ENCODE measurements at regions of chr14 and their contacts with region 1.

Region 1: GRCh38 chr14:102774391-102775153 is 2.7 kb upstream of the TRAF3 start:
- DNase-seq: peak; percentile 48 to 91 (median 59)
- ATAC-seq: peak; percentile 59
- H3K4me3 ChIP-seq: no peak overlapping the region
- H3K4me3 Mint-ChIP-seq: peak overlapping the region; percentile 83
- H3K27ac ChIP-seq: peak overlapping the region; percentile 64 to 92
- H3K27ac Mint-ChIP-seq: peak overlapping the region; percentile 88
- H3K4me1 ChIP-seq: peaks cover 39% of the 10 kb centered on the region
- H3K4me1 Mint-ChIP-seq: peaks cover 26% of the 10 kb centered on the region
- H3K27me3 ChIP-seq: no peaks in the 10 kb centered on the region
- H3K27me3 Mint-ChIP-seq: no peaks in the 10 kb centered on the region
- CTCF ChIP-seq: peak; percentile 73

Region 2: GRCh38 chr14:102086972-102087761 is 687.4 kb before region 1 on chr14 and contains the start of gene HSP90AA1:
- CTCF ChIA-PET with region 1: no interaction called
- POLR2A ChIA-PET with region 1: no interaction called
- intact Hi-C with region 1: loop called in 1 of 2 experiments (anchors 5 kb)
- DNase-seq: peak; percentile 88 to 98 (median 94)
- ATAC-seq: peak; percentile 77
- H3K4me3 ChIP-seq: peak within 1 kb of the TSS; percentile 74
- H3K4me3 Mint-ChIP-seq: peak within 1 kb of the TSS; percentile 98
- H3K27ac ChIP-seq: peak within 1 kb of the TSS; percentile 95 to 98
- H3K27ac Mint-ChIP-seq: peak within 1 kb of the TSS; percentile 91
- H3K4me1 ChIP-seq: peaks cover 51% of the 10 kb centered on the region
- H3K4me1 Mint-ChIP-seq: peaks cover 64% of the 10 kb centered on the region
- H3K27me3 ChIP-seq: no peaks in the 10 kb centered on the region
- H3K27me3 Mint-ChIP-seq: no peaks in the 10 kb centered on the region
- CTCF ChIP-seq: no peak
- total RNA-seq, gene HSP90AA1: 451 to 462 TPM

Region 3: GRCh38 chr14:102694530-102695166 is 79.9 kb before region 1 on chr14:
- CTCF ChIA-PET with region 1: interaction called, 6 read pairs
- POLR2A ChIA-PET with region 1: no interaction called
- intact Hi-C with region 1: loop called in 1 of 2 experiments (anchors 5 kb)
- DNase-seq: peak; percentile 15 to 81 (median 45)
- ATAC-seq: peak; percentile 89
- H3K4me3 ChIP-seq: no peak overlapping the region
- H3K4me3 Mint-ChIP-seq: no peak overlapping the region
- H3K27ac ChIP-seq: no peak overlapping the region
- H3K27ac Mint-ChIP-seq: no peak overlapping the region
- H3K4me1 ChIP-seq: no peaks in the 10 kb centered on the region
- H3K4me1 Mint-ChIP-seq: peaks cover 37% of the 10 kb centered on the region
- H3K27me3 ChIP-seq: no peaks in the 10 kb centered on the region
- H3K27me3 Mint-ChIP-seq: no peaks in the 10 kb centered on the region
- CTCF ChIP-seq: peak; percentile 83

Region 4: GRCh38 chr14:102793531-102794328 is 19.2 kb after region 1 on chr14:
- CTCF ChIA-PET with region 1: no interaction called
- POLR2A ChIA-PET with region 1: no interaction called
- intact Hi-C with region 1: no loop called
- DNase-seq: no peak
- ATAC-seq: no peak
- H3K4me3 ChIP-seq: no peak overlapping the region
- H3K4me3 Mint-ChIP-seq: peak overlapping the region; percentile 46
- H3K27ac ChIP-seq: no peak overlapping the region
- H3K27ac Mint-ChIP-seq: no peak overlapping the region
- H3K4me1 ChIP-seq: peaks cover 44% of the 10 kb centered on the region
- H3K4me1 Mint-ChIP-seq: peaks cover 71% of the 10 kb centered on the region
- H3K27me3 ChIP-seq: no peaks in the 10 kb centered on the region
- H3K27me3 Mint-ChIP-seq: no peaks in the 10 kb centered on the region
- CTCF ChIP-seq: no peak

Region 5: DNA sequence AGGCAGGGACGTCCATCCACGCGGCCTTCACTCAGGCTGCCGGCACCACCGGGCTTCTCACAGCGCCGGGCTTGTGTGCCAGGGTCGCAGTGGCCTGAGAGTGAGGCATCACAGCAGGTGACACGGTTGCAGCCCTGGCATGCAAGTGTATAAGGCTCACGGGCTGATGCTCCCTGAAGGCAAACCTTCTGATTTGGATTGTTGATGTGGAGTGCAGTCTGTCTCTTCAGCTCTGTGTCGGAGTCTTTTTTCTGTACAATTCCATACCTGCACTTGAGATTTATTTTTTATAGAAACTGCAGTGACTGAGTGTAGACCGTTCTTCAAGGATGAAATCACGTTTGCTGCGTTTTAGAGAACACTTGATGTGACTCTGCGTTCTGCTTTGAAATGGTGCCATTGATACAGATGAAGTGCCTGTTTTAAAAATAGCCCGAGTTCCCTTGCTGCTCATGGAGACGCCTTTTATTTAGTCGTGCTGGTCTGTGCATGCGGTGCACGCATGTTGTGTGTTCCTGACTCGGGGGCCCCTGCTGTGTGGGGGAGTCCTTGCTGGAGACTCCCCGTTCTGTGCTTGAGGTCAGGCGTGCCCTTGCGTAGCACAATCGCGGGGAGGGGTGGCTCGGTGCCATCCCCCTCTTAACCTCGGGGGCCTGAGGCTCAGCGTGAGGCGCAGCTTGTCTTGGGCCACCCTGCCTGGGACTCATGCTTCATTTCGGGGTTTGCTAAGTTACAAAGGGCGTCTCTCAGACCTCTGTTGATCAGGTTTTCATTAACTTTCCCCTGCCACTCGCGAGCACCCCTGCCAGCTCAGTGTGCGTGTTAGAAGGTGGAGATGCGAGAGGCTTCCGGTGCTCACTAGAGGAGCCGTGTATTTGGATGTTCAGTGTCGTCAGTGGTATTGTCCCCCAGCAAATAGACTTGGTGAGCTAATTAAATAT is 126.3 kb after region 1 on chr14:
- CTCF ChIA-PET with region 1: no interaction called
- POLR2A ChIA-PET with region 1: no interaction called
- intact Hi-C with region 1: loop called in 1 of 2 experiments (anchors 1 kb)
- DNase-seq: peak in 6 of 14 experiments; percentile 16 to 37 (median 26)
- ATAC-seq: peak; percentile 91
- H3K4me3 ChIP-seq: no peak overlapping the region
- H3K4me3 Mint-ChIP-seq: peak overlapping the region; percentile 18
- H3K27ac ChIP-seq: peak overlapping the region; percentile 29 to 38
- H3K27ac Mint-ChIP-seq: peak overlapping the region; percentile 82
- H3K4me1 ChIP-seq: peaks cover 9% of the 10 kb centered on the region
- H3K4me1 Mint-ChIP-seq: peaks cover 11% of the 10 kb centered on the region
- H3K27me3 ChIP-seq: no peaks in the 10 kb centered on the region
- H3K27me3 Mint-ChIP-seq: no peaks in the 10 kb centered on the region
- CTCF ChIP-seq: no peak

Region 6: DNA sequence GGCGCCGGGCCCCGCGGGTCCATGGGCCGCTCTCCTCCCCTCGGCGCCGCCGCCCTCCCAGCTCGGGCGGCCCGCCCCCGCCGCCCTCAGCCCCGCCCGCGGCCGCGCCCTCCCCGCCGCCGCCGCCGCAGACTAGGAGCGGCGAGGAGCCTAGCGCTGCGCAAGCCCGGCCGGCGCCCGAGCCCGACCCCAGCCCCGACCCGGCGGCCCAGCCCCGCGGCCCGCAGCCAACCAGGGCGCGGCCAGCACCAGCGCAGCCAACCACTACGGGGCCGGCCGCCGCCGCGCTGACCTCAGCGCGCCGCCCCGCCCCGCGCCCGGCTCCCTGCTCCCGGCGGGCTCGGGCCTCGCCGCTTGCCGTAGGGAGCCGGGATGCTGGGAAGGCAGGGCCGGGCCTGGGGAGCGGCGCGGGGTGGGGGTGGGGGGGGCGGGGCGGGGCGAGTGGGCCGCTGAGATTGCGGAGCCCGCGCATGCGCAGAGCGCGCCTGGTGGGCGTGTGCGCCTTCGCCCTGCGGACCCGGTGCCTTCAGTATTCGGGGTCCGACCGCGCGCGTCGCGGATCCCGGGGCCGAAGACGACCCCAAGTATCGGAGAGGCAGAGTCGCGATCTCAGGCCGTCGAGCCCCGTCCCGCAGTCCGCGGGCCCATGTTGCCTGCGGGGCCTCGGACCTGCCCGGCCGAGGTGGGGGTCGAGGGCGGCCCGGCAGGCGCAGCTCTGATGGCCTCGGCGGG is 283.0 kb after region 1 on chr14 and contains the start of gene CDC42BPB:
- CTCF ChIA-PET with region 1: no interaction called
- POLR2A ChIA-PET with region 1: no interaction called
- intact Hi-C with region 1: loop called in 1 of 2 experiments (anchors 5 kb)
- DNase-seq: peak; percentile 25 to 82 (median 52)
- ATAC-seq: peak; percentile 89
- H3K4me3 ChIP-seq: peak within 1 kb of the TSS; percentile 52
- H3K4me3 Mint-ChIP-seq: peak within 1 kb of the TSS; percentile 88
- H3K27ac ChIP-seq: no peak within 1 kb of the TSS
- H3K27ac Mint-ChIP-seq: no peak within 1 kb of the TSS
- H3K4me1 ChIP-seq: peaks cover 18% of the 10 kb centered on the region
- H3K4me1 Mint-ChIP-seq: peaks cover 11% of the 10 kb centered on the region
- H3K27me3 ChIP-seq: peaks cover 6 to 12% of the 10 kb centered on the region in 2 experiments
- H3K27me3 Mint-ChIP-seq: peaks cover 15% of the 10 kb centered on the region
- CTCF ChIP-seq: no peak
- total RNA-seq, gene CDC42BPB: 6.6 to 7.6 TPM

Measured in CD4-positive, alpha-beta T cell (primary cell).